Ascending aorta (tissue), 2 donors: ENCODE measurements at regions of chr17 and their contacts with region 1.

Region 1: GRCh38 chr17:21252796-21253645 is at the start of gene NATD1:
- DNase-seq: peak; percentile 63 to 94
- H3K4me3 ChIP-seq: peak within 1 kb of the TSS; percentile 50 to 86
- H3K27ac ChIP-seq: peak within 1 kb of the TSS; percentile 43 to 77
- H3K4me1 ChIP-seq: peaks cover 16 to 27% of the 10 kb centered on the region in 2 donors
- H3K27me3 ChIP-seq: no peaks in the 10 kb centered on the region
- CTCF ChIP-seq: peak in 1 of 3 experiments; percentile 15
- total RNA-seq, gene NATD1: 13.4 TPM

Region 2: DNA sequence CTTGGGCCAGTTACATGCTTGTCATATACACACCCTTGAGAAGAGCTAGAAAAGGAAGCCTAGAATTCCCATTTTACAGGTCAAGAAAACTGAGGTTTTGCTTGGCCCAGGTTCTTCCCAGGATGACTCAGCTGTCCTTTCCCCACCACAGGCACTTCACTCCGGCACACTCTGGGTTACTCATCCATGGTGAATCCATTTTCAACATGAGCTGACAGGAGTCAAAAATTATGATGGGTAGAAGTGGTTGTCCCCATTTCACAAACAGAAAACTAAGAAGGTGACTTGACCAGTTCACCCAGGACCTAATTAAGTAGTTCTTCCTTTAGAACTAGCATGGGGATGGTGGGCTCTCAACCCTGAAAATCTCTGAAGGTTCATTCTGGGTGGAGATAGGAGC is 277.5 kb before region 1 on chr17:
- intact Hi-C with region 1: no loop called
- DNase-seq: no peak
- H3K4me3 ChIP-seq: no peak overlapping the region
- H3K27ac ChIP-seq: no peak overlapping the region
- H3K4me1 ChIP-seq: no peaks in the 10 kb centered on the region
- H3K27me3 ChIP-seq: no peaks in the 10 kb centered on the region
- CTCF ChIP-seq: no peak

Region 3: GRCh38 chr17:21126645-21127510 is 126.1 kb before region 1 on chr17 and contains the start of gene DHRS7B:
- intact Hi-C with region 1: loop called (anchors 2 kb)
- DNase-seq: peak; percentile 79 to 97
- H3K4me3 ChIP-seq: peak within 1 kb of the TSS; percentile 81 to 85
- H3K27ac ChIP-seq: peak within 1 kb of the TSS; percentile 93 to 96
- H3K4me1 ChIP-seq: peaks cover 3 to 8% of the 10 kb centered on the region in 2 donors
- H3K27me3 ChIP-seq: no peaks in the 10 kb centered on the region
- CTCF ChIP-seq: peak in 1 of 3 experiments; percentile 4
- total RNA-seq, gene DHRS7B: 89.5 TPM

Region 4: GRCh38 chr17:21214015-21214776 is 38.8 kb before region 1 on chr17 and contains the start of gene TMEM11:
- intact Hi-C with region 1: loop called (anchors 1 kb)
- DNase-seq: peak; percentile 83 to 97
- H3K4me3 ChIP-seq: peak within 1 kb of the TSS; percentile 84 to 96
- H3K27ac ChIP-seq: peak within 1 kb of the TSS; percentile 95 to 97
- H3K4me1 ChIP-seq: peaks cover 8 to 34% of the 10 kb centered on the region in 2 donors
- H3K27me3 ChIP-seq: no peaks in the 10 kb centered on the region
- CTCF ChIP-seq: peak in 1 of 3 experiments; percentile 2
- total RNA-seq, gene TMEM11: 25.7 TPM

Region 5: DNA sequence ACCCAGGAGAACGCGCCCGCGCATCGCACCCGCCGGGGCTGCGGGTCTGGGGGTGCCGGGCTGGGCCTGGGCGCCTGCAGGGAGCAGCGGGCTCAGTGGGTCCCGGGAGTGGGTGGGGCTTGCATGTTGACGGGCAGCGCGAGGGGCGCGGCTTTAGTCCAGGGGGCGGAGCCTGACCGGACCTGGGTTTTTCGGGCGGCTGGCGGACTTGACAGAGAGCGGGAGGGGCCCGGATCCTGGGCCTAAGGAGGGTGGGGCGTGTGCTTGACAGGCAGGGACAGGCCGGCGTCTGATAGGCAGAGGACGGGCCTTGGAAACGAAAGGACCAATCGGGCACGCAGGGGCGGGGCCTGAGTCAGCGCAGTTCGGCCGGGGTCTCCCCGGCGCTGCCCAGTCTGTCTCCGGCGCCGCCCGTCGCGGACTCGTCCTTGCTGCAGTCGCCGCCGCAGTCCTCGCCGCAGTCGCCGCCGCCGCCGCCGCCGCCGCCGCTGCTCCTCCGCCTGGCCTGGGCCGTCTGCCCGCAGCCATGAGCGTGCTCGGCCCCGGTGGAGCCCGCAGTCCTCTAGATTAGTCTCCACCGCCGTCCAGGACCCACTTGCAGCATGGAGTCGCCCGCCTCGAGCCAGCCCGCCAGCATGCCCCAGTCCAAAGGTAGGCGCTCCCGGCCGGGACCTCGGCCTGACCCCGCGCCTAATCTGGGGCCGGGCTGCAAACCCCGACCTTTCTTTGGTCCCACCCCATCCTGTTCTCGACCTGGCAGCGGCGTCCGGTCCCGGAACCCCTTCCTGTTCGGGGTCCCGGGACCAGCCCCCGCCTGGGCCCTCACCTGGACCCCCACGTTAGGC is 31.5 kb after region 1 on chr17 and contains the start of gene MAP2K3:
- intact Hi-C with region 1: no loop called
- DNase-seq: peak; percentile 98 to 100
- H3K4me3 ChIP-seq: peak within 1 kb of the TSS; percentile 91 to 94
- H3K27ac ChIP-seq: peak within 1 kb of the TSS; percentile 95 to 97
- H3K4me1 ChIP-seq: peaks cover 32 to 46% of the 10 kb centered on the region in 2 donors
- H3K27me3 ChIP-seq: no peaks in the 10 kb centered on the region
- CTCF ChIP-seq: no peak
- total RNA-seq, gene MAP2K3: 294 TPM

Region 6: GRCh38 chr17:21318439-21318838 is 65.4 kb after region 1 on chr17:
- intact Hi-C with region 1: loop called (anchors 10 kb)
- DNase-seq: peak in 1 of 2 donors; percentile 66
- H3K4me3 ChIP-seq: no peak overlapping the region
- H3K27ac ChIP-seq: no peak overlapping the region
- H3K4me1 ChIP-seq: peaks cover 0 to 2% of the 10 kb centered on the region in 2 donors
- H3K27me3 ChIP-seq: no peaks in the 10 kb centered on the region
- CTCF ChIP-seq: no peak